CD8-positive, alpha-beta T cell (primary cell): ENCODE measurements at regions of chr5 and their contacts with region 1.

Region 1: DNA sequence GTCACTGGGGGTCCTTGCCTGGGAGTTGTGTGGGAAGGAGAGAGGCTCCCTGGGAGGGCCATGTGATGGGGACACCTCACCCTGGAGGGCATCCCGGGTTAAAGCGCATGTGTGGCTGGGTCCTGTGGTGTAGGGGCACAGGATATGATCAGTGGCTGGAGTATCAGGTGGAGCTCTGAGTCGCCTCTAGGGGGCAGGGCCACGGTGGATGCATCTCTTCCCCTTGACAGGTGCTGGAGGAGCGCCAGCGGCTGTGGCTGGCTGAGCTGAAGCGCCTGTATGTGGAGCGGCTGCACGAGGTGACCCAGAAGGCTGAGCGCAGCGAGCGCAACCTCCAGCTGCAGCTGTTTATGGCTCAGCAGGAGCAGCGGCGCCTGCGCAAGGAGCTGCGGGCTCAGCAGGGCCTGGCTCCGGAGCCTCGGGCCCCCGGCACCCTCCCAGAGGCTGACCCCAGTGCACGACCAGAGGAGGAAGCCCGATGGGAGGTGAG is 7.6 kb downstream of the N4BP3 start:
- DNase-seq: peak; percentile 71 to 93 (median 87)
- ATAC-seq: peak; percentile 72
- H3K4me3 ChIP-seq: peak overlapping the region; percentile 9 to 23
- H3K4me3 Mint-ChIP-seq: peak overlapping the region; percentile 60
- H3K27ac ChIP-seq: no peak overlapping the region
- H3K27ac Mint-ChIP-seq: peak overlapping the region; percentile 73
- H3K4me1 ChIP-seq: peaks cover 76% of the 10 kb centered on the region
- H3K4me1 Mint-ChIP-seq: peaks cover 56% of the 10 kb centered on the region
- H3K27me3 ChIP-seq: peaks cover 0 to 3% of the 10 kb centered on the region in 2 experiments
- H3K27me3 Mint-ChIP-seq: no peaks in the 10 kb centered on the region
- CTCF ChIP-seq: peak; percentile 73

Region 2: DNA sequence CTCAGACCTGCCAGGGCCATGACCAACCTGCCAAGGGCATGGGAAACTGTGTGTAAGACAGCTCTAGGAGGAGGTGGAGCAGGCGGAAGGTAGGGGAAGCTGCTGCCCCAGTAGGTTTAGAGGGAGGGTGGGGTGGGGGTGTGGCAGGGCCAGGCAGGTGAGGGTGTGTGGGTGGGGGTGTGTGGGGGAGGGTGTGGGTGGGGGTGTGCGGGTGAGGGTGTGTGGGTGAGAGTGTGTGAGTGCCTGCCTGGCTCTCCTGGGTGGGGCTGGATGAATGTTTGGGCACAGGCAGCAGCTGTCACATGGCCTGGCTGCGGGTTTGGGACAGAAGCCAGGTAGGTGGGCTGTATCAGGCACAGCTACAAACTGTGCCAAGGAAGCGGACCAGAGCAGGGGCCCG is 16.4 kb before region 1 on chr5:
- CTCF ChIA-PET with region 1: interaction called, 16 read pairs
- POLR2A ChIA-PET with region 1: interaction called, 3 read pairs
- intact Hi-C with region 1: no loop called
- DNase-seq: peak in 2 of 9 experiments; percentile 25 to 34
- ATAC-seq: peak; percentile 17
- H3K4me3 ChIP-seq: no peak overlapping the region
- H3K4me3 Mint-ChIP-seq: no peak overlapping the region
- H3K27ac ChIP-seq: no peak overlapping the region
- H3K27ac Mint-ChIP-seq: no peak overlapping the region
- H3K4me1 ChIP-seq: peaks cover 15% of the 10 kb centered on the region
- H3K4me1 Mint-ChIP-seq: peaks cover 16% of the 10 kb centered on the region
- H3K27me3 ChIP-seq: no peaks in the 10 kb centered on the region
- H3K27me3 Mint-ChIP-seq: no peaks in the 10 kb centered on the region
- CTCF ChIP-seq: no peak

Region 3: GRCh38 chr5:178137991-178138390 is 17.1 kb after region 1 on chr5:
- CTCF ChIA-PET with region 1: interaction called, 76 read pairs
- POLR2A ChIA-PET with region 1: interaction called, 4 read pairs
- intact Hi-C with region 1: no loop called
- DNase-seq: no peak
- ATAC-seq: no peak
- H3K4me3 ChIP-seq: no peak overlapping the region
- H3K4me3 Mint-ChIP-seq: no peak overlapping the region
- H3K27ac ChIP-seq: no peak overlapping the region
- H3K27ac Mint-ChIP-seq: no peak overlapping the region
- H3K4me1 ChIP-seq: no peaks in the 10 kb centered on the region
- H3K4me1 Mint-ChIP-seq: peaks cover 24% of the 10 kb centered on the region
- H3K27me3 ChIP-seq: no peaks in the 10 kb centered on the region
- H3K27me3 Mint-ChIP-seq: no peaks in the 10 kb centered on the region
- CTCF ChIP-seq: no peak